HepG2 (cell line): ENCODE measurements at regions of chrX and their contacts with region 1.

Region 1: DNA sequence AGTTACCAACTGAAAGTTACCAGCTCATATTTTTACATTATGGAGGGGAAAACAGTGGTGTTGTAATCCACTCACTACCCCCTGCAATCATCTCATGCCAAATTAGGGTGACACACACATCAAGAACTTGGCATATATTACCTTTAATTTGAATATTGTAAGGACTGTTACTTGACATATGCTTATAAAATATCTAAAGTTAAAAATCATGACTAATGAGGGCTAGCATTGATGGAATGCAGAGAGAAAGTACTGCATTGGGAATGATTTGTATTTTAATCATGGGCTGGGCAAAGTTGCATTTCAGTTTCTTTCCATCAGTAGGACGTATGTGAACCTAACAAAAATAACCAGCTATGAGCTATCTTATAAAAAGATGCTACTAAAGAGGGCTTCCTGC is 517.5 kb upstream of the GRIA3 start:
- DNase-seq: no peak
- ATAC-seq: no peak
- H3K4me3 ChIP-seq: no peak overlapping the region
- H3K27ac ChIP-seq: no peak overlapping the region
- H3K4me1 ChIP-seq: no peaks in the 10 kb centered on the region
- H3K27me3 ChIP-seq: no peaks in the 10 kb centered on the region
- CTCF ChIP-seq: no peak
- EP300 ChIP-seq: no peak
- POLR2A ChIP-seq: no peak
- RAD21 ChIP-seq: no peak

Region 2: DNA sequence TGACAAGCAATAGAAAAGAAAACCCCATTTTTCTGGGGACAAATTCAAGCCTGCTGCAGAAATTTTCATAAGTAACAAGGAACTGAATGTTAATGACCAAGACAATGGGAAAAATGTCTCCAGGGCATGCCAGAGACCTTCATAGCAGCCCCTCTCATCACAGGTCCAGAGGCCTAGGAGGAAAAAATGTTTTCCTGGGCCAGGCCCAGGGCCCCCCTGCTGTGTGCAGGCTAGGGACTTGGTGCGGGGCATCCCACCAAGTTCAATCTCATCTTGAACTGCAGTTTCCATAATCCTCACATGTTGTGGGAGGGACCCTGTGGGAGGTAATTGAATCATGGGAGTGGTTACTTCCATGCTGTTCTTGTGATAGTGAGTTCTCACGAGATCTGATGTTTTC is 306.0 kb after region 1 on chrX:
- CTCF ChIA-PET with region 1: no interaction called
- POLR2A ChIA-PET with region 1: no interaction called
- in situ Hi-C with region 1: no loop called
- intact Hi-C with region 1: loop called (anchors 5 kb)
- DNase-seq: no peak
- ATAC-seq: no peak
- H3K4me3 ChIP-seq: no peak overlapping the region
- H3K27ac ChIP-seq: no peak overlapping the region
- H3K4me1 ChIP-seq: no peaks in the 10 kb centered on the region
- H3K27me3 ChIP-seq: no peaks in the 10 kb centered on the region
- CTCF ChIP-seq: no peak
- EP300 ChIP-seq: no peak
- POLR2A ChIP-seq: no peak
- RAD21 ChIP-seq: no peak